ENCODE measurements at regions of chr11 and their contacts with region 1.

Region 1: DNA sequence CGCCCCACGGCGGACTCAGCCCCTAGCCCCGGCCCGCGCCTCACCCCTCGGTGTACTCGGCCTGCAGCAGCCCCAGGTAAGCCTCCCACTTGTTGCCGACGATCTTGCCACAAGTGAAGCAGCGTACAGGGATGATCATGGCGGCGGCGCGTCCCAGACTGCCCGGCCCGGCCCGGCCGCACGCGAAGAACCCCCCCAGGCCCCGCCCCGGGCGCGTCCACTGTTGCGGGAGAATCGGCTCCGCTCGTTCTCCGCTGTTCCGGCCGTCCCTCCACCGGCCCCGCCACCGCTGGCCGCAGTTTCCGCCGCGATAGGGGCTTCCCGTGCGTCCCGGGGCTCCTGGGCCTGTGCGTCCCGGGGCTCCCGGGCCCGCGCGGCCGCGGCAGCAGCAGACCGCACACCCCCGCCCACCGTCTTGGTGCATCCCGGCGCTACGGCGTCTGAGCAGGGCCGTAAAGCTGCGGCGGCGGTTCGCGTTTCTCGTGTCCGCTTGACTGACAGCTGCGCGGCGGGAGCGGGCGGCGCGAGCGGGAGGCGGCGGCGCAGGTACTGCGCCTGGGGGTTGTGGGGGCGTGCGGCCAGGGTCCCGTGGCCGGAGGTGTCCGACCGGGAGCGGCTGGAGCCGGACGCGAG is at the starts of genes POLR2L and TSPAN4:
- DNase-seq: peak; percentile 86 to 95 (median 91)
- ATAC-seq: peak; percentile 68
- H3K4me3 ChIP-seq: peak within 1 kb of the TSS; percentile 98
- H3K27ac ChIP-seq: peak within 1 kb of the TSS; percentile 98
- H3K4me1 ChIP-seq: peaks cover 32 to 83% of the 10 kb centered on the region in 2 experiments
- H3K27me3 ChIP-seq: no peaks in the 10 kb centered on the region
- CTCF ChIP-seq: 0 out of 6 replicates have a peak, but pooled peaks of 1 of the 3 experiments have one; percentile 14
- EP300 ChIP-seq: no peak
- POLR2A ChIP-seq: peak; percentile 95
- RAD21 ChIP-seq: no peak
- polyA plus RNA-seq, gene POLR2L: 97.7 to 108 TPM
- polyA plus RNA-seq, gene TSPAN4: 0.07 to 2.4 TPM

Region 2: DNA sequence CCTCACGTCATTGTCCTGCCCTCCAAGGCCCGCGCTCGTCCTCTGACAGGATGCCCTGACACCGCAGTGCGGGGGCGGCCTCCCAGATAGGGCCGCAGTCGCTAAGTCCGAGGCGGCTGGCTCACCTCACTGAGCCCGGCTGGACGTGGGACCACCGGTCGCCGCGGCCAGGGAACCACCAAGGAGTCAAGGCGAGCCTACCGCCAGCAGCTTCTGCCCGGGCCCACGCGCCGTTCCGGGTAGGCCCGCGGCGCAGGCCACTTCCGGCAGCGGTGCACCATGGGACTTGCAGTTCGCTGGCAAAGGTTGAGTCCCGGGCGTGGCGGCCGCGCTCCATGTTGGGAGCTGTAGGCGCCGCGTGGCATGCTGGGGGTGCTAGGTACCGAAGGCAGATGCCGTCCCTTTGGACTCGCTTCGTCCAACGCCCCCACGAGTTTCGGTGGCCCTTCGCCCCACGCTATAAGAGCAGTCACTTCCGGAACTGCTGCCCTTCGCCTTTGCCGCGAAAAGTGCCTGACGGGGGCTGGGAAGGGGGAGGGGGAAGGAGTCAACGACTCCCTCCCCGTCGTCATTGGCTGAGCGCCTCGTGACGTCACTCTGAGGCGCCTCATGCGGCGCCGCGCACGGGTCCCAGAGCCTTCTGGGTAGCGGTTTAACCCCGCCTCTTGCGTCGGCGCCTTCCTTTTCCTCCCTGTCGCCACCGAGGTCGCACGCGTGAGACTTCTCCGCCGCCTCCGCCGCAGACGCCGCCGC is 33.0 kb before region 1 on chr11 and contains the start of gene RPLP2:
- CTCF ChIA-PET with region 1: no interaction called
- POLR2A ChIA-PET with region 1: interaction called, 8 read pairs
- in situ Hi-C with region 1: no loop called
- intact Hi-C with region 1: loop called (anchors 2 kb)
- DNase-seq: peak; percentile 84 to 99 (median 90)
- ATAC-seq: peak; percentile 83
- H3K4me3 ChIP-seq: peak within 1 kb of the TSS; percentile 99
- H3K27ac ChIP-seq: peak within 1 kb of the TSS; percentile 98
- H3K4me1 ChIP-seq: peaks cover 22 to 63% of the 10 kb centered on the region in 2 experiments; a peak in 4 of 5 replicates
- H3K27me3 ChIP-seq: no peaks in the 10 kb centered on the region
- CTCF ChIP-seq: no peak; a peak in 1 of 6 replicates
- EP300 ChIP-seq: no peak; the same call in 1 of the 2 replicates
- POLR2A ChIP-seq: peak; percentile 93
- RAD21 ChIP-seq: no peak
- polyA plus RNA-seq, gene RPLP2: 1,853 to 1,893 TPM

Region 3: DNA sequence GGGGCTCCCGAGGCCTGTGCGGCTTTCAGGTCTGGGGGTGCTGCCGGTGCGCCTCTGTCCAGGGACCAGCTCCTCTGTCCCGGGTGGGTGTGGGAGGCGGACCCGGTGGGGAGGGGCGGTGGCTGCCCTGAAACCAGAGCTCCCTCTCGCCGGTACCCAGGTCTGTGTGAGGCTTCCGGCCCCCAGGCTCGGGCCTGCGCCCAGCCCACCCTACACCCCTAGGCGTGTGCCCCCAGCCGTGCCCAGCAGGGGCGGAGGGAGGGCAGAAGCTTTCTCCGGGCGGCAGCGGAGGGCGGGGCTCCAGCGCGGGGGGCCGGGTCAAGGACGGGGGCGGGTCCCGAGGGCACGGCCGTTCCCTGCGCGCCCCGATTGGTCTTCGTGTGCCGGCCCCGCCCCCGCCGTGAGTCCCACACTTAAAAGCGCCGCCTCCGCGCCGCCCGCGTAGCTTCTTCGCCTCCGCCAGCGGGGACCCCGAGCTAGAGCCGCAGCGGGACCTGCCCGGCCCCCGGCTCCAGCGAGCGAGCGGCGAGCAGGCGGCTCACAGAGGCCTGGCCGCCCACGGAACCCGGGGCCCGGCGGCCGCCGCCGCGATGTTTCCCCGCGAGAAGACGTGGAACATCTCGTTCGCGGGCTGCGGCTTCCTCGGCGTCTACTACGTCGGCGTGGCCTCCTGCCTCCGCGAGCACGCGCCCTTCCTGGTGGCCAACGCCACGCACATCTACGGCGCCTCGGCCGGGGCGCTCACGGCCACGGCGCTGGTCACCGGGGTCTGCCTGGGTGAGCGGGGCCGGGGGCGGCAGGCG is 23.2 kb before region 1 on chr11:
- CTCF ChIA-PET with region 1: no interaction called
- POLR2A ChIA-PET with region 1: interaction called, 36 read pairs
- in situ Hi-C with region 1: no loop called
- intact Hi-C with region 1: no loop called
- DNase-seq: peak; percentile 85 to 95 (median 90)
- ATAC-seq: peak; percentile 88
- H3K4me3 ChIP-seq: peak overlapping the region; percentile 89
- H3K27ac ChIP-seq: peak overlapping the region; percentile 92
- H3K4me1 ChIP-seq: peaks cover 11 to 67% of the 10 kb centered on the region in 2 experiments; a peak in 4 of 5 replicates
- H3K27me3 ChIP-seq: no peaks in the 10 kb centered on the region
- CTCF ChIP-seq: no peak
- EP300 ChIP-seq: no peak
- POLR2A ChIP-seq: peak; percentile 84
- RAD21 ChIP-seq: no peak

Region 4: DNA sequence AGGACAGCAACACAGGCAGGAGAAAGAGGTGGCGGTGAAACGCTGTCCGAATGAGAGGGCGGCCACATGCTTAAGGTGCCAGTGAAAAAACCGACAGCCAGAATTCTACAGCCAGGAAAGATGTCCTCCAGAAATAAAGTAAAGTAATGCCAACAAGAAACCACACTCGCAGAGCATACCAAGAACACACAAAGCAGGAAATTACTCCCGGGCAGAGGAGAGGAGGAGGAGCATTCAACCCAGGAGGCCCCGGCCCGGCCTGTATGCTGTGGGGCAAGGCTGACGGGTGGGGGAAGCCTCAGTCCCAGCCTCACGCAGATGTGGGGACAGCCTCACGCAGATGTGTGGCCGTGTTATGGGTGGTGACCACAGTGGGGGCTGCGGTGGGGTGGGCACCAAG is 40.1 kb after region 1 on chr11:
- CTCF ChIA-PET with region 1: no interaction called
- POLR2A ChIA-PET with region 1: no interaction called
- in situ Hi-C with region 1: no loop called
- intact Hi-C with region 1: no loop called
- DNase-seq: no peak
- ATAC-seq: no peak
- H3K4me3 ChIP-seq: no peak overlapping the region
- H3K27ac ChIP-seq: no peak overlapping the region
- H3K4me1 ChIP-seq: peaks cover 5 to 39% of the 10 kb centered on the region in 2 experiments; a peak in 4 of 5 replicates
- H3K27me3 ChIP-seq: no peaks in the 10 kb centered on the region
- CTCF ChIP-seq: no peak
- EP300 ChIP-seq: no peak
- POLR2A ChIP-seq: no peak
- RAD21 ChIP-seq: no peak

Region 5: DNA sequence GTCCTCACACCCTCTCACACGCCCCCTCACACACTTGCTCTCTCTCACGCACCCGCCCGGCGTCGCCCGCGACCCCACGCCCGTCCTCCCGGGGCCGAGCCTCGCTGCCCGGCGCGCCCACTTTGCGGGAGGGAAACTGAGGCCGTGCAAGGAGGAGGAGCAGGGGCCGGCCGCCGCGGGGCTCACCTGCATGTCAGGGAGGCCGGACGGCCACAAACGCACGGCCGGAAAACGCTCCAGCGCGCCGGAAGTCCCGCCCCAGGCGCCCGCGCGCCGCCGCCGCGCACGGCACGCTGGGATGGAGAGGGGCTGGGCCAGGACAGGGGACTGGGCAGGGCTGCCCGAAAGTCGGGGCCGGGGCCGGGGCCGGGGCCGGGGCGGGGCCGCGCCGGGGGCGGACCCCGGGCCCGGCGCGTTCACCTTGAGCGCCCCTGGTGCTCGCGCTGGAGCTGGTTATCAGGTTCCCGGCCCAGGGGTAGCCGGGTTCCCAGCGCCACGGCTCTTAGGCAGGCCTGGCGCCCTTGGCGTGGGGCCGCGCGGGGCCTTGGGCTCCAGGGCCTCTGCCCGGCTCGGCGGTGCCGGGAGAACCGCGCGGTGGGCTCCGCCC is 68.2 kb after region 1 on chr11 and contains the start of gene CHID1:
- CTCF ChIA-PET with region 1: no interaction called
- POLR2A ChIA-PET with region 1: interaction called, 3 read pairs
- in situ Hi-C with region 1: no loop called
- intact Hi-C with region 1: loop called (anchors 10 kb)
- DNase-seq: peak; percentile 93 to 98 (median 97)
- ATAC-seq: peak; percentile 96
- H3K4me3 ChIP-seq: peak within 1 kb of the TSS; percentile 100
- H3K27ac ChIP-seq: peak within 1 kb of the TSS; percentile 93
- H3K4me1 ChIP-seq: peaks cover 37 to 59% of the 10 kb centered on the region in 2 experiments
- H3K27me3 ChIP-seq: no peaks in the 10 kb centered on the region
- CTCF ChIP-seq: peak in 2 of 3 experiments; percentile 9 to 26; a peak in 2 of 6 replicates
- EP300 ChIP-seq: no peak
- POLR2A ChIP-seq: peak; percentile 76
- RAD21 ChIP-seq: no peak
- polyA plus RNA-seq, gene CHID1: 15.1 to 29.6 TPM

Measured in K562 (cell line).